ENCODE measurements at regions of chr2 and their contacts with region 1.

Region 1: GRCh38 chr2:98385050-98385699 is 38.9 kb downstream of the CNGA3 start:
- DNase-seq: peak; percentile 77
- H3K4me3 ChIP-seq: no peak overlapping the region
- H3K27ac ChIP-seq: no peak overlapping the region
- H3K4me1 ChIP-seq: no peaks in the 10 kb centered on the region
- CTCF ChIP-seq: peak; percentile 98

Region 2: GRCh38 chr2:97713296-97714083 is 671.7 kb before region 1 on chr2 and contains the start of gene ZAP70:
- CTCF ChIA-PET with region 1: no interaction called
- POLR2A ChIA-PET with region 1: no interaction called
- intact Hi-C with region 1: loop called (anchors 5 kb)
- DNase-seq: peak; percentile 81
- H3K4me3 ChIP-seq: peak within 1 kb of the TSS; percentile 69
- H3K27ac ChIP-seq: peak within 1 kb of the TSS; percentile 20
- H3K4me1 ChIP-seq: peaks cover 34% of the 10 kb centered on the region
- CTCF ChIP-seq: no peak
- total RNA-seq, gene ZAP70: 56.9 and 57.9 TPM in 2 replicates

Region 3: DNA sequence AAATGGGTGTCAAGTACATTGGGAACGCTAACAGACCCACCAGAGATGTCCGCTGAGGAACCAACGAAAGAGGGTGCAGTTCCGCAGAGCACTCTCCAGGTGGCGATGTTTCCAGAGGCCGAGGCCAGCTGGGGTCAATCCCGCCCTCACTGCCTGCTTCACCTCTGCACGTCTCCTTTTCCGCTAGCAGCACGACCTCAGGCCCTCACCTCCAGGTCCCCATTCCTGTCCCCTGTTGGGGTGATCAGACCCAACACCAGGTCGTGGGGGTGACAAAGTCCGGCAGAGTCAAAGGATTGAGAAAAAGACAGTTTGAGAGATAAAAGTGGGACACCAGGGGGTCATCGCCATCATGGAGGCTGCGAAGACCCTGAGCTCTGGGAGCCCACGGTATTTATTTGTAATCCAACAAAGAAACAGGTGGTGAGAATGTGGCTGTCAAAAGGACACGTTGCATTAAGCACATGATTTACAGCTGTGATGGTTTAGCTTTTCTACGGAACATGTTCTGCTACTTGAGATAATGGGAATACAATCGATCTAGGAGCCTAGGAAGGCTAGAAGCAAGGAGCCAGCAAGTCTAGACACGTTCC is 644.5 kb before region 1 on chr2:
- CTCF ChIA-PET with region 1: no interaction called
- POLR2A ChIA-PET with region 1: no interaction called
- intact Hi-C with region 1: loop called (anchors 2 kb)
- DNase-seq: peak; percentile 63
- H3K4me3 ChIP-seq: no peak overlapping the region
- H3K27ac ChIP-seq: no peak overlapping the region
- H3K4me1 ChIP-seq: no peaks in the 10 kb centered on the region
- CTCF ChIP-seq: peak; percentile 88

Region 4: GRCh38 chr2:97774425-97774824 is 610.8 kb before region 1 on chr2:
- CTCF ChIA-PET with region 1: no interaction called
- POLR2A ChIA-PET with region 1: no interaction called
- intact Hi-C with region 1: loop called (anchors 10 kb)
- DNase-seq: peak; percentile 39
- H3K4me3 ChIP-seq: no peak overlapping the region
- H3K27ac ChIP-seq: no peak overlapping the region
- H3K4me1 ChIP-seq: no peaks in the 10 kb centered on the region
- CTCF ChIP-seq: peak; percentile 82

Region 5: GRCh38 chr2:97806738-97807618 is 578.2 kb before region 1 on chr2:
- CTCF ChIA-PET with region 1: no interaction called
- POLR2A ChIA-PET with region 1: no interaction called
- intact Hi-C with region 1: loop called (anchors 1 kb)
- DNase-seq: peak; percentile 79
- H3K4me3 ChIP-seq: no peak overlapping the region
- H3K27ac ChIP-seq: no peak overlapping the region
- H3K4me1 ChIP-seq: peaks cover 5% of the 10 kb centered on the region
- CTCF ChIP-seq: peak; percentile 96

Region 6: GRCh38 chr2:98157557-98157956 is 227.6 kb before region 1 on chr2:
- CTCF ChIA-PET with region 1: no interaction called
- POLR2A ChIA-PET with region 1: no interaction called
- intact Hi-C with region 1: no loop called
- DNase-seq: peak; percentile 59
- H3K4me3 ChIP-seq: no peak overlapping the region
- H3K27ac ChIP-seq: no peak overlapping the region
- H3K4me1 ChIP-seq: no peaks in the 10 kb centered on the region
- CTCF ChIP-seq: peak; percentile 73

Region 7: GRCh38 chr2:98422449-98422848 is 37.3 kb after region 1 on chr2:
- CTCF ChIA-PET with region 1: no interaction called
- POLR2A ChIA-PET with region 1: no interaction called
- intact Hi-C with region 1: no loop called
- DNase-seq: no peak
- H3K4me3 ChIP-seq: no peak overlapping the region
- H3K27ac ChIP-seq: no peak overlapping the region
- H3K4me1 ChIP-seq: no peaks in the 10 kb centered on the region
- CTCF ChIP-seq: no peak

Measured in OCI-LY7 (cell line).